CD14-positive monocyte (primary cell): ENCODE measurements at regions of chr3 and their contacts with region 1.

Region 1: DNA sequence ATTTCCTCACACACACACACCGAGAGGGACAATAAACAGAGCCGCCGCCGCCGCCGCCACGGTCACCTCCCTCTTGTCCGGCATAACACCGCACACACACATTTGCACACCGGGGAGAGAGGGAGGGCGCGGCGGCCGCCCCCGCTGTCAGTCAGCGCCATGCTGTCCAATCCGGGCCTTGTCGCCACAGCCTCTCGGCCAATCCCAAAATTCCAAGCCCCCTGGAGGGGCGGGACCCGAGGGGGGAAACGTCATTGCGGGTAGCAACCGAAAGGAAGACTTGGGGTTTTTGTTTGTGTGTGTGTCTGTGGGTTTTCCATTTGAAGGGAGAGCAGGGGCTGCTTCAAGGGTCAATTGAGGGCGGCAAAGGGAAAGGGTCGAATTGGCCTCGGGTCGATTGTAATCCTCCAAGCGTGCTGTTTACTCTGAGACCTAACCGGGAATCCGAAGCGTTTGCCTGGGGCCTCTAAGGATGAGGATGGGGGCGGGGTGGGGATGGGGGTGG is at the start of gene TOP2B:
- DNase-seq: peak; percentile 89 to 95 (median 95)
- H3K4me3 ChIP-seq: peak within 1 kb of the TSS; percentile 78 to 94 (median 88)
- H3K4me3 Mint-ChIP-seq: peak within 1 kb of the TSS; percentile 90 to 100
- H3K27ac ChIP-seq: peak within 1 kb of the TSS; percentile 89 to 90
- H3K27ac Mint-ChIP-seq: peak within 1 kb of the TSS; percentile 96 to 99 (median 99)
- H3K4me1 ChIP-seq: peaks cover 23 to 47% of the 10 kb centered on the region in 2 donors
- H3K4me1 Mint-ChIP-seq: peaks cover 44% of the 10 kb centered on the region
- H3K27me3 ChIP-seq: no peaks in the 10 kb centered on the region
- H3K27me3 Mint-ChIP-seq: no peaks in the 10 kb centered on the region
- CTCF ChIP-seq: no peak
- polyA plus RNA-seq, gene TOP2B: 21.4 to 27.0 (median 26.1) TPM

Region 2: DNA sequence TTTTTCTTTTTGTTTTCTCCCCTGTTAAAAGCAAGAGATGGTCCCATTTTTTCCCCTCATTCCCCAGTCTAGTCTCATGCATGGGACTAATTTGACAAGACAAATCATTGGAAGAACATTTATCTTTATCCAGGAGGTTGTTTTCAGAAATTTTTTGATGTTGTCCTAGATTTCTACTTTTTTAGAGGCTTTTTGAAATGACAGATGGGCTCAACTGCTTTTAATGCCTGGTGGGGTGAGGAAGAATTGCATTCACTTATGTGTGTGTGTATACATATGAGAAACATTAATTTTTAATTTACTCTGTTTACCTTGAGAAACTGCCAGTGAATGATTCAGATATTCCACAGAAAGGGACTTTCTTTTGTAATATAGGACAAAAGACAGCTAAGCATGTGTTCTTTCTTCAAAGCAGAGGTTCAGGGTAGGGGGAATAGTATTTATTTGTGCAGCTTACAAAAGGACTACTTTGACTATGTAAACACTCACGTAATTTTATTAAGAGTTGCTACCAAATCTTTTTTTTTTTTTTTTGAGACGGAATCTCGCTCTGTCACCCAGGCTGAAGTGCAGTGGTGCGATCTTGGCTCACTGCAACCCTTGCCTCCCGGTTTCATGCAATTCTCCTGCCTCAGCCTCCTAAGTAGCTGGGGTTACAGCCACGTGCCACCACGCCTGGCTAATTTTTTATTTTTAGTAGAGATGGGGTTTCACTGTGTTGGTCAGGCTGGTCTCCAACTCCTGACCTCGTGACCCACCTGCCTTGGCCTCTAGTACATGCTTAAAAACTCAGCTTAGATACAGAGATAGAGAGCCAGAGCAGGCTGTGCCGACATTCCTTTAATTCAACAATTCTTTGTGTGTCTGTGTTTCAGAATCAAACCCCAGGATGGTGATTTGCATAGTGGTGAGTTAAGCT is 366.9 kb before region 1 on chr3:
- intact Hi-C with region 1: no loop called
- DNase-seq: no peak
- H3K4me3 ChIP-seq: no peak overlapping the region
- H3K4me3 Mint-ChIP-seq: peak overlapping the region in 1 of 2 donors; percentile 37
- H3K27ac ChIP-seq: no peak overlapping the region
- H3K27ac Mint-ChIP-seq: no peak overlapping the region
- H3K4me1 ChIP-seq: no peaks in the 10 kb centered on the region
- H3K4me1 Mint-ChIP-seq: no peaks in the 10 kb centered on the region
- H3K27me3 ChIP-seq: no peaks in the 10 kb centered on the region
- H3K27me3 Mint-ChIP-seq: no peaks in the 10 kb centered on the region
- CTCF ChIP-seq: no peak

Region 3: GRCh38 chr3:25782938-25783660 is 118.2 kb after region 1 on chr3 and contains the start of gene NGLY1:
- intact Hi-C with region 1: loop called (anchors 5 kb)
- DNase-seq: peak; percentile 78 to 81 (median 78)
- H3K4me3 ChIP-seq: peak within 1 kb of the TSS; percentile 85 to 93 (median 86)
- H3K4me3 Mint-ChIP-seq: peak within 1 kb of the TSS; percentile 88 to 92
- H3K27ac ChIP-seq: peak within 1 kb of the TSS; percentile 91 to 97
- H3K27ac Mint-ChIP-seq: peak within 1 kb of the TSS; percentile 87 to 96 (median 92)
- H3K4me1 ChIP-seq: peaks cover 23 to 33% of the 10 kb centered on the region in 2 donors
- H3K4me1 Mint-ChIP-seq: peaks cover 34% of the 10 kb centered on the region
- H3K27me3 ChIP-seq: no peaks in the 10 kb centered on the region
- H3K27me3 Mint-ChIP-seq: no peaks in the 10 kb centered on the region
- CTCF ChIP-seq: no peak
- polyA plus RNA-seq, gene NGLY1: 11.4 to 33.4 (median 29.6) TPM